Mammary epithelial cell (primary cell): ENCODE measurements at regions of chr4 and their contacts with region 1.

Region 1: DNA sequence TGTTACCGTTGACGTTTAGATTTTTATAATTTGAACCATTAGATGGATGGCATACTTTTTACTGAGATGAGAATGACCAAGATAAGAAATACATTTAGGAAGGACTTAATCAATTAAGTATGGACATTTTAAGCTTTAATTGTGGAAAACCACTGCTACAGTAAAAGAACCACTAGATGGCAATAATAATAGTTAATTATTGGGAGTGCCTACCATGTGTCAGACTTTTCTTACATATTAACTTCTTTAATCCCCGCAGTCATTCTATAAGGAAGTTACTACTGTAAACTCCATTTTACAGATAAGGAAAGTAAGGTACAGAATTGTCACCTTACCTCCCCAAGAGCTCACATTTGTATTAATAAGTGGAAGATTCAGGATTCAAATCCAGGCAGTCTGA is 48.5 kb upstream of the MYOZ2 start:
- DNase-seq: no peak
- H3K4me3 ChIP-seq: no peak overlapping the region
- H3K27ac ChIP-seq: no peak overlapping the region
- H3K4me1 ChIP-seq: no peaks in the 10 kb centered on the region
- H3K27me3 ChIP-seq: no peaks in the 10 kb centered on the region
- CTCF ChIP-seq: peak; percentile 30 to 40

Region 2: GRCh38 chr4:119113033-119113655 is 26.0 kb after region 1 on chr4:
- CTCF ChIA-PET with region 1: no interaction called
- dilution Hi-C with region 1: no loop called
- in situ Hi-C with region 1: no loop called
- intact Hi-C with region 1: no loop called
- DNase-seq: peak; percentile 85
- H3K4me3 ChIP-seq: peak overlapping the region in 1 of 3 experiments; percentile 32
- H3K27ac ChIP-seq: peak overlapping the region; percentile 73
- H3K4me1 ChIP-seq: peaks cover 7% of the 10 kb centered on the region
- H3K27me3 ChIP-seq: no peaks in the 10 kb centered on the region
- CTCF ChIP-seq: no peak

Region 3: DNA sequence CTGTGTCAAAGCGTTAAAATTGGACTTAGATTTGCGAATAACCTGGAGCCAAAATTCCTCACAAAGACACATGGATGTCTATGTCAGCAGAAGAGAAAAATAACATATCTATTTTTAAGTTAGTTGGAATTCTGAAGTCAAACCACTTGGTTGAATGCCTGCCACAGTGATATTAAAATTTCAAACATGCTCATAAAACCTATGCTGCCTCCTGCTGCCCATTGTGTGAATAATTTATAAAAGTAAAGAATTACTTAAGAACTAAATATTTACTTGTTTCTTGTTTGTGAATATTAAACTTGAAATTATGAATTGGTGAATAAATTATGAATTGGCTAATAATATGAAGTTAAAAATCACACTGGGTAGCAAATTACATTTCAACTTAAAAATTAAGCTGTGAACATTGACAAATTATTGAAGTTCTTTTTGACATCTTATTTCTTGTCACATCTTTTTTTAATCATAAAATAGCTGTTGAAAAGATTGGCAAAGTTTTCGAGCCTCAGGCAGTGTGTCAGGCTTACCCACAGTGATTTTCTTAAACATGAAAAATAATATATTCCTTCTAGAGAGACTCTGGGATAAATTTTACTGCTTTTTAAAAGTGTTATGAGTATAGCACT is 199.4 kb after region 1 on chr4:
- CTCF ChIA-PET with region 1: no interaction called
- dilution Hi-C with region 1: no loop called
- in situ Hi-C with region 1: no loop called
- intact Hi-C with region 1: loop called (anchors 1 kb)
- DNase-seq: peak; percentile 34
- H3K4me3 ChIP-seq: no peak overlapping the region
- H3K27ac ChIP-seq: peak overlapping the region; percentile 15
- H3K4me1 ChIP-seq: no peaks in the 10 kb centered on the region
- H3K27me3 ChIP-seq: no peaks in the 10 kb centered on the region
- CTCF ChIP-seq: peak; percentile 48 to 58